Right cardiac atrium (tissue), 5 donors: ENCODE measurements at regions of chr4 and their contacts with region 1.

Region 1: DNA sequence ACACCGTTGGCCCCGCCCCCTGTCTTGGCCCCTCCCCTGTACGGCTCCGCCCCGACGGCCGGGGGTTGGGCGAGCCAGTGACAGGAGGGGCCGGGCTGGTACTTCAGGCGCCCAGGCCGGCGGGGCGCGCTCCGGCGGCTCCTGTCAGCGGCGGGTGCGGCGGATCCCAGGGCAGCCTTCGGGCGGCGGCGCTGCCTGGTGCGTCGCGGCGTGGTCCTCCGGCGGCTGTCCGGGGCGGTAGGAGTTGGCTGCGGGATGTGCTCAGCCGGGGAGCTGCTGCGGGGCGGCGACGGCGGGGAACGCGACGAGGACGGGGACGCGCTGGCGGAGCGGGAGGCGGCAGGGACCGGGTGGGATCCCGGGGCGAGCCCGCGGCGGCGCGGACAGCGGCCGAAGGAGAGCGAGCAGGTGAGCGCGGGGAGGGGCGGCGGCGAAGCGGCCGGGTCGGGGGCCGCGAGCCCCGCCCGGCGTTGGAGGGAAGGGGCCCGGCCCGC is at the start of gene FAM241A:
- DNase-seq: peak; percentile 90 to 96 (median 96)
- ATAC-seq: peak; percentile 98 to 99
- H3K4me3 ChIP-seq: peak within 1 kb of the TSS; percentile 67
- H3K27ac ChIP-seq: peak within 1 kb of the TSS; percentile 85
- H3K4me1 ChIP-seq: no peaks in the 10 kb centered on the region
- H3K27me3 ChIP-seq: no peaks in the 10 kb centered on the region
- total RNA-seq, gene FAM241A: 4.8 to 7.9 (median 7.1) TPM

Region 2: GRCh38 chr4:111864066-111864465 is 281.3 kb before region 1 on chr4:
- intact Hi-C with region 1: no loop called
- DNase-seq: no peak
- ATAC-seq: no peak
- H3K4me3 ChIP-seq: no peak overlapping the region
- H3K27ac ChIP-seq: no peak overlapping the region
- H3K4me1 ChIP-seq: no peaks in the 10 kb centered on the region
- H3K27me3 ChIP-seq: no peaks in the 10 kb centered on the region

Region 3: GRCh38 chr4:111977419-111977965 is 167.9 kb before region 1 on chr4:
- intact Hi-C with region 1: no loop called
- DNase-seq: no peak
- ATAC-seq: no peak
- H3K4me3 ChIP-seq: no peak overlapping the region
- H3K27ac ChIP-seq: no peak overlapping the region
- H3K4me1 ChIP-seq: no peaks in the 10 kb centered on the region
- H3K27me3 ChIP-seq: no peaks in the 10 kb centered on the region

Region 4: GRCh38 chr4:112002248-112002661 is 143.1 kb before region 1 on chr4:
- intact Hi-C with region 1: no loop called
- DNase-seq: no peak
- ATAC-seq: no peak
- H3K4me3 ChIP-seq: no peak overlapping the region
- H3K27ac ChIP-seq: no peak overlapping the region
- H3K4me1 ChIP-seq: no peaks in the 10 kb centered on the region
- H3K27me3 ChIP-seq: no peaks in the 10 kb centered on the region

Region 5: DNA sequence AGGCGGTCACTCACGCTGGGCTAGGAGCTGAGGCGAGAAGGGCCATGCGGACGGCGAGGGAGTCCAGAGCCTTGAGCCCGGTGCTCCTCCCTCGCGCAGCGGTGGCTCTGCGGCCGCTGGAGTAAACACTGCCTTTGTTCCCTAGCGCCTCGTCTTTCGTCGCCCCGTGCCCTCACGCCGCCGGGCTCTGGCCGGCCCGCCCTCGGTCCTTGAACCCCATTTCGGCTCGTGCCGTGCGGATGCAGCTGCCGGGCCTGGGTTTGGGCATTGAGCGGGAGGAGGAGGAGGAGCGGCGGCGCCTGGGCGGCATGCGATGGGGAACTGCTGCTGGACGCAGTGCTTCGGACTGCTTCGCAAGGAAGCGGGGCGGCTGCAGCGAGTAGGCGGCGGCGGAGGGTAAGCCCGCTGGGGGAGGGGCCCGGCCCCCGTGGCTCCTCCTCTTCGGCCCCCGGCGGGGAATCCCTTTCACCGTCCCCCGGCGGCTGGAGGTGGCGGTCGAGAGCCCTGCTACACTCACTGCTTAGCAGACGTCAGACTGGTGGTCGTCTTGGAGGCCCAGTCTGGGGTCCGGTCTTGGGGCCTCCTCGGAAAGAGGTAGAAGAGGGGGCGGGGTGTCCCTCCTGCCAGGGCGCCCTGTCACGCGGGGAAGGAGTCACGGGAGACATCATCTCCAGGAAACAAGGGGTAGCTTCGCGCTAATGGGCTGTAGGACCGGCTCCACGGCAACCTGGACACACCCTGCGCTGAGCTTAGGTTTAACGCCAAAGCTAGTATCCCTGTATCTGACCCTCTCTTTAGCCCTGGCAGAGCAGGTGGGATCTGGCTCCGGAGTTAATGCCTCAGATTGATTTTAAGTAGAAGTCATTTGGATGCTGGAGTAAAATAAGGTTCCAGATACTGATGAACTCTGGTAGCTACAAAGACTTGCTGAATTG is 86.7 kb after region 1 on chr4 and contains the start of gene AP1AR:
- intact Hi-C with region 1: loop called in 2 of 4 experiments (anchors 5 kb)
- DNase-seq: peak; percentile 86 to 94 (median 93)
- ATAC-seq: peak; percentile 89 to 90
- H3K4me3 ChIP-seq: peak within 1 kb of the TSS; percentile 66
- H3K27ac ChIP-seq: peak within 1 kb of the TSS; percentile 98
- H3K4me1 ChIP-seq: no peaks in the 10 kb centered on the region
- H3K27me3 ChIP-seq: no peaks in the 10 kb centered on the region
- total RNA-seq, gene AP1AR: 9.8 to 11.6 (median 10.9) TPM